PC-9 (cell line): ENCODE measurements at regions of chr7 and their contacts with region 1.

Region 1: DNA sequence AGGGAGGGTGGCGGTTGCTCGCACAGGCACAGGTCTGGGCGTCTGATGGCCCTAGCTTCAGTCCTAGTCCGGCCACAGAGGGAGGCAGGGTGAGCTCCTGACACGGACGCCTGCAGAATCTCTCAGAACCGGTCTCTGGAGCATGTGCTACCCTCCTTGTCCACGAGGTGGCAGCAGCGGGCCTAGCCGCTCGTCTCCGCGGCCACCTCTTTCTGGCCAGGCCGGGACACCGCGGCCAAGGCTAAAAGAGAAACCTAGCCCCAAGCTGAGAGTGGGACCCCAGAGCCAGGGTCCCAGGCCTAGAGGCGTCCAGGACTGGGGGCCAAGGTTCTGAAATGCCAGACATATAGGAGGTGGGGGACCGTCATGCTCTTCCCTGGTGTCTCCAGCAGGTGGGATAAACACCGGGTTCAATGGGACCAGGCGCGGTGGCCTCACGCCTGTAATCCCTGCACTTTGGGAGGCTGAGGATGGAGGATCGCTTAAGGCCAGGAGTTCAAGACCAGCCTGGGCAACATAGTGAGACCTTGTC is 3.2 kb upstream of the LAT2 start:
- DNase-seq: peak; percentile 46 to 91
- H3K4me3 ChIP-seq: no peak overlapping the region
- H3K27ac ChIP-seq: no peak overlapping the region
- H3K4me1 ChIP-seq: peaks cover 14% of the 10 kb centered on the region
- H3K27me3 ChIP-seq: no peaks in the 10 kb centered on the region
- CTCF ChIP-seq: peak; percentile 97

Region 2: GRCh38 chr7:74051629-74052410 is 154.8 kb before region 1 on chr7:
- CTCF ChIA-PET with region 1: no interaction called
- POLR2A ChIA-PET with region 1: no interaction called
- intact Hi-C with region 1: loop called (anchors 5 kb)
- DNase-seq: peak; percentile 43 to 78
- H3K4me3 ChIP-seq: no peak overlapping the region
- H3K27ac ChIP-seq: no peak overlapping the region
- H3K4me1 ChIP-seq: no peaks in the 10 kb centered on the region
- H3K27me3 ChIP-seq: peaks cover 19% of the 10 kb centered on the region
- CTCF ChIP-seq: peak; percentile 65

Region 3: DNA sequence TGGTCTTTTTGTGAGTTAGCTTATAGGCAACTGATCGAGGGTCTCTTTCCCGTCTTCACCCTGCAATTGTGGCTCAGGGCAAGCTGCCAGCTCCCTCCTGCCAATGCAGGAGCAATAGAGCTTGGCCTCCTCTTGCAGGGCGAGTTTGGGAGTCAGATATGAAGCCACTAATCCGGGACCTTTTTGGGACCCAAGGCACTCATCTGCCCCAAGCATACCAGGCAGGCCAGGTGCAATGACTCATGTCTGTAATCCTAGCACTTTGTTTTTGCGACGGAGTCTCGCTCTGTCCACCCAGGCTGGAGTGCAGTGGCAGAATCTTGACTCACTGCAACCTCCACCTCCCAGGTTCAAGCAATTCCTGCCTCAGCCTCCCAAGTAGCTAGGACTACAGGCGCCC is 102.0 kb before region 1 on chr7:
- CTCF ChIA-PET with region 1: interaction called, 12 read pairs
- POLR2A ChIA-PET with region 1: no interaction called
- intact Hi-C with region 1: no loop called
- DNase-seq: peak; percentile 87 to 92
- H3K4me3 ChIP-seq: no peak overlapping the region
- H3K27ac ChIP-seq: peak overlapping the region; percentile 73
- H3K4me1 ChIP-seq: peaks cover 27% of the 10 kb centered on the region
- H3K27me3 ChIP-seq: no peaks in the 10 kb centered on the region
- CTCF ChIP-seq: no peak

Region 4: GRCh38 chr7:74281030-74281429 is 74.4 kb after region 1 on chr7:
- CTCF ChIA-PET with region 1: no interaction called
- POLR2A ChIA-PET with region 1: interaction called, 15 read pairs
- intact Hi-C with region 1: no loop called
- DNase-seq: no peak
- H3K4me3 ChIP-seq: no peak overlapping the region
- H3K27ac ChIP-seq: peak overlapping the region; percentile 91
- H3K4me1 ChIP-seq: peaks cover 41% of the 10 kb centered on the region
- H3K27me3 ChIP-seq: no peaks in the 10 kb centered on the region
- CTCF ChIP-seq: no peak

Region 5: GRCh38 chr7:74401137-74401859 is 194.6 kb after region 1 on chr7:
- CTCF ChIA-PET with region 1: interaction called, 56 read pairs
- POLR2A ChIA-PET with region 1: no interaction called
- intact Hi-C with region 1: loop called (anchors 2 kb)
- DNase-seq: peak; percentile 51 to 80
- H3K4me3 ChIP-seq: no peak overlapping the region
- H3K27ac ChIP-seq: no peak overlapping the region
- H3K4me1 ChIP-seq: no peaks in the 10 kb centered on the region
- H3K27me3 ChIP-seq: no peaks in the 10 kb centered on the region
- CTCF ChIP-seq: peak; percentile 98

Region 6: GRCh38 chr7:74569501-74570075 is 362.9 kb after region 1 on chr7:
- CTCF ChIA-PET with region 1: no interaction called
- POLR2A ChIA-PET with region 1: no interaction called
- intact Hi-C with region 1: no loop called
- DNase-seq: peak in 1 of 2 experiments; percentile 72
- H3K4me3 ChIP-seq: no peak overlapping the region
- H3K27ac ChIP-seq: peak overlapping the region; percentile 67
- H3K4me1 ChIP-seq: peaks cover 17% of the 10 kb centered on the region
- H3K27me3 ChIP-seq: no peaks in the 10 kb centered on the region
- CTCF ChIP-seq: no peak

Region 7: GRCh38 chr7:75010036-75010435 is 803.4 kb after region 1 on chr7:
- CTCF ChIA-PET with region 1: no interaction called
- POLR2A ChIA-PET with region 1: no interaction called
- intact Hi-C with region 1: no loop called
- DNase-seq: no peak
- H3K4me3 ChIP-seq: no peak overlapping the region
- H3K27ac ChIP-seq: no peak overlapping the region
- H3K4me1 ChIP-seq: no peaks in the 10 kb centered on the region
- H3K27me3 ChIP-seq: no peaks in the 10 kb centered on the region
- CTCF ChIP-seq: no peak